Mammary epithelial cell (primary cell): ENCODE measurements at regions of chr12 and their contacts with region 1.

Region 1: DNA sequence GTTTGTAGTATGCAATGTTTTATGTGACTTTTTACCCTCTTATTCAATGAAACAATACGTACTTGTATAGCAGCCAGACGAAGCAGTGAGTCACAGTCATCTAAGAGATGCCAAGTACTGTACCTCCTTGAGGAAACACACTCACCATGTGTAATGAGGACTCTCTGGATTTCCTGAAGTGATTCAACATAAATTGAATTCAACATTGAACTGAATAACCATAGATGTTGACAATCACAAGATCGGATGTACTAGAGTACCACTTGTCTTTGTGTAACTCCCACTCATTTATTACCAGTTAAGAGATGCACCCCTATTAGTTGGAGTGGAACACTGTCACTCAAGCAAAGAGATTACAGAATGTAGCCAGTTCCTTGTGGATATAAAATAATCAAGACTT is 175.2 kb upstream of the HMGA2 start:
- DNase-seq: peak; percentile 99
- H3K4me3 ChIP-seq: no peak overlapping the region
- H3K27ac ChIP-seq: peak overlapping the region; percentile 93
- H3K4me1 ChIP-seq: peaks cover 31% of the 10 kb centered on the region
- H3K27me3 ChIP-seq: no peaks in the 10 kb centered on the region
- CTCF ChIP-seq: no peak

Region 2: DNA sequence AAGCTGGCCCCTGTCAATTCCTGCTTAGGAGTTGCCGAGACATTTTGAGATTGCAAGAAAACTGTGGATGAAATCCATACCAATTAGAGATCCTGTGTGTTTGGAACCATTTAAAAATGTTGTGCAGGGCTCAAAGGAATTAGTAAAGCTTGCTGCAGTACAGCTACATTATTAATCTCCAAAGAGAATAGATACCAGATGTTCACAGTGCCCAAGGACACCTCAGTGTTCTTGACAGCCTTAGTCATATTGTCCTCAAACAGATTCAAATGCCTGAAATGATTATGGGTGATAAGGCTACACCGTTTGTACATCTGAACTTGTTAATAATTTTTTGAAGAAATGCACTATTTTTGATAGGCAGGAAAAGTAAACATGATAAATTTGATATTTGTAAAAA is 206.1 kb before region 1 on chr12:
- CTCF ChIA-PET with region 1: no interaction called
- dilution Hi-C with region 1: no loop called
- in situ Hi-C with region 1: no loop called
- intact Hi-C with region 1: no loop called
- DNase-seq: no peak
- H3K4me3 ChIP-seq: no peak overlapping the region
- H3K27ac ChIP-seq: no peak overlapping the region
- H3K4me1 ChIP-seq: no peaks in the 10 kb centered on the region
- H3K27me3 ChIP-seq: no peaks in the 10 kb centered on the region
- CTCF ChIP-seq: no peak

Region 3: DNA sequence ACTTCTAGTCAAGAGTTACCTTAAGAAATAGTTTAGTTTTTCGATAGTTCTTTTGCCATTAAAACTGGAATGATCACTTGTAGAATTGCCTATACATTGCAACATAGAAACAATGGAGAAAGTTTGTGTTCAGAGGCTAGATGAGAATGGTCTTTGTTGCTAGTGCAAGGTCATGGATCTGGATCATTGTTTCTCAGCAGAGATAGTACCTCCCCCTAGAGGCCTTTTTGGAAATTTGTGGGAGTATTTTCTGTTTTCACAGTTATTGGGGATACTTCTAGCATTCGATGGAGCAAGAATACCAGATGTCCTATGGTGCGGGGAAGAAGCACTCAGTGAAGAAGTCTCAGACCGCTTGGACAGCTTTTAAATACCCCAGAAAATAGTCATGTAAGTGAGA is 36.4 kb after region 1 on chr12:
- CTCF ChIA-PET with region 1: no interaction called
- dilution Hi-C with region 1: no loop called
- in situ Hi-C with region 1: no loop called
- intact Hi-C with region 1: loop called (anchors 5 kb)
- DNase-seq: peak; percentile 48
- H3K4me3 ChIP-seq: no peak overlapping the region
- H3K27ac ChIP-seq: no peak overlapping the region
- H3K4me1 ChIP-seq: peaks cover 8% of the 10 kb centered on the region
- H3K27me3 ChIP-seq: no peaks in the 10 kb centered on the region
- CTCF ChIP-seq: peak; percentile 53 to 68